ENCODE measurements at regions of chr2 and their contacts with region 1.

Region 1: DNA sequence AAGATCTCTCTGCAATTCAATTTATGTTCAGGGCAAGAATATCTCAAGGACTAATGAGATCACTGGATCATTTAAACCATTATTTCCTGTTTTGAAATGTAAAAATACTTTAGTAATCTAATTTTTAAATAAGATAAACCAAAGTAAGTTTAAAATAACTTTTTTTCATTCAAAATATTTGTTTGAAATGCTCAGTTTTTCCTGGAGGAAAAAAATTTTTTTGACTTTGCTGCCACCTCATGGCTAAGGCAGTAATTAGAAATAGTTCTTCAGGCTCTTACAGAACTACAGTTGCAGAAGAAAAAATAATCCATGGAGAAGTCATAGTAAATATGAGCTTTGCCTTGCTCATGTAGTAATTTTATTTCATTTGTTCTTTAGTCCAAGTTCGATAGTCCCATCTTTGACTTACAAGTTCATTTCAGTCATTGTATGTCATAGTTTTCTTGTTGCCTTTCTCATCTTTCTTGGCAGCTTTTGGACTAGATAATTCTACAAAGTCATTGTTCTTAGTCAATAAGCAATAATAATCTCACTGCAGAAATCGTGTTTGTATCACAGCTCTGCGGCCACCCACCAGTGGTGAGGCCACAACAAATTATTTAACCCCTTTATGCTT is 127.4 kb downstream of the DPP4 start:
- DNase-seq: peak; percentile 28
- ATAC-seq: 0 out of 2 replicates have a peak, but pooled peaks have one; percentile 49
- H3K4me3 ChIP-seq: no peak overlapping the region
- H3K27ac ChIP-seq: no peak overlapping the region
- H3K4me1 ChIP-seq: no peaks in the 10 kb centered on the region
- H3K27me3 ChIP-seq: 0 out of 2 replicates have a peak, but pooled peaks cover 3% of the 10 kb centered on the region
- CTCF ChIP-seq: peak; percentile 54
- POLR2A ChIP-seq: no peak
- RAD21 ChIP-seq: peak; percentile 57

Region 2: DNA sequence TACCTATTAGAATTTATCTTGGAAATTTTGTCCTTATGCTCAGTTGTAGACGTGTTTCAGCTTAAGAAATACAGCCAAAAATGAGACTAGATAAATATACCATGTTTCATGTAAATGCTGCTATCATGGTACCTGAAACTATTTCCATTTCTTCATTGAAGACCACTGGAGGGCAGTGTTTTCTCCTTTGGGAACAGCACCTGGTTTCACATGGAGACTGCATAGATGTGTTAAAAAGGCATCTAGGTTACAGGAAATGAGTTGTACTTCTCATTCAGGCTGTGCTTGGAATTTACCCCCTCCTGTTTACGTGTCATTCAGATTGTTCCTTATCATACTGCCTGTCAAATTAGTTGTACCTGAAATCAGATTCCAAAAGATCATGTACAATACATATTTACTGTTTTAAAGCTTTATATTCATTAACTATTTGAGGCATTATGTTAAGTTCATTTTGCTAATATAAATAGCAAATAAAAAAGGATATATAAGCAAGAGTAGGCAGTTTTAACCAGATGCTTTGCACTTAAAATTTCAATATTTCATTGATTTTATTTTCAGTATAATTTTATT is 695.6 kb before region 1 on chr2:
- CTCF ChIA-PET with region 1: no interaction called
- POLR2A ChIA-PET with region 1: no interaction called
- dilution Hi-C with region 1: no loop called
- in situ Hi-C with region 1: loop called (anchors 25 kb)
- intact Hi-C with region 1: loop called (anchors 2 kb)
- DNase-seq: peak; percentile 37
- ATAC-seq: no peak
- H3K4me3 ChIP-seq: no peak overlapping the region
- H3K27ac ChIP-seq: no peak overlapping the region
- H3K4me1 ChIP-seq: no peaks in the 10 kb centered on the region
- H3K27me3 ChIP-seq: peaks cover 23% of the 10 kb centered on the region
- CTCF ChIP-seq: peak; percentile 53
- POLR2A ChIP-seq: no peak
- RAD21 ChIP-seq: peak; percentile 45

Region 3: GRCh38 chr2:161273038-161273760 is 673.4 kb before region 1 on chr2:
- CTCF ChIA-PET with region 1: no interaction called
- POLR2A ChIA-PET with region 1: no interaction called
- dilution Hi-C with region 1: no loop called
- in situ Hi-C with region 1: loop called (anchors 25 kb)
- intact Hi-C with region 1: no loop called
- DNase-seq: peak; percentile 72
- ATAC-seq: peak; percentile 61
- H3K4me3 ChIP-seq: no peak overlapping the region
- H3K27ac ChIP-seq: no peak overlapping the region
- H3K4me1 ChIP-seq: no peaks in the 10 kb centered on the region
- H3K27me3 ChIP-seq: no peaks in the 10 kb centered on the region; the same call in 1 of the 2 replicates
- CTCF ChIP-seq: peak; percentile 71
- POLR2A ChIP-seq: no peak
- RAD21 ChIP-seq: peak; percentile 66

Region 4: DNA sequence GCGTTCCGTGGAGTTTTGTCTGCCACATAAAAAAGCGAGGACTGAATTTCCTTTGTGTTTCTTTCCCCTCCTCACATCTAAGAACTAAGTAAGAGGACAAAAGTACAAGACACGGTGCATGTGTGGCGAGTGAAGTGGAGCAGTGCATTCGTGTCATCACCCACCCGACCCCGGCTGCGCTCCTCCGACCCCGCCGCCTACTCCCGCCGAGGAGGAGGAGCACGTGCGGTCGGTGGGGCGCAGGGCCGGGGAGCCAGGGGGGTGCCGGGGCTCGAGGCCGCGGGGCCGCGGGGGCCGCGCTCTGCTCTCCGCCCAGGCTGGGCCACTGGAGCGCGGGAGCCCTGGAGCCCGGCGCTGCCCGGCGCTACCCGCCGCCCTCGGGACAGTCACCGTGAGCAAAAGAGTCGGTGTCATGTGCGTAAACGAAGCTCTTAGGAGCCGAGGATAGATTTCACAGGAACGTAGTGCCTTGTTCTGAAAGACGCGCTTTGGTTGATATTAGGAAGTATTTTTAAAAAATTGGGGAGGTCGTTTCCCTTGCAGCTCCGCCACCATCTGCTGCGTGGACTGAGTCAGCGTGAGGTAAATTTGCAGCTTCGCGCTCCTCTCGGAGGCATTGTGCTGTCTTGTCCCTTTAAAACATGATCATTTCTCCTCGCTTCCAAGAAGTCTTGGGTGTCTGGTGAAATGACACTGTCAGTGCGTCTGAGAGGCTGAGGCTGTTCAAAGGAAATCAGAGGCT is 519.5 kb before region 1 on chr2:
- CTCF ChIA-PET with region 1: no interaction called
- POLR2A ChIA-PET with region 1: no interaction called
- dilution Hi-C with region 1: no loop called
- in situ Hi-C with region 1: no loop called
- intact Hi-C with region 1: loop called (anchors 5 kb)
- DNase-seq: peak; percentile 43
- ATAC-seq: peak; percentile 57
- H3K4me3 ChIP-seq: peak overlapping the region; percentile 4; the same call in 1 of the 2 replicates
- H3K27ac ChIP-seq: no peak overlapping the region
- H3K4me1 ChIP-seq: no peaks in the 10 kb centered on the region; the same call in 1 of the 2 replicates
- H3K27me3 ChIP-seq: peaks cover 74% of the 10 kb centered on the region
- CTCF ChIP-seq: no peak; the same call in 1 of the 2 replicates
- POLR2A ChIP-seq: no peak
- RAD21 ChIP-seq: 0 out of 2 replicates have a peak, but pooled peaks have one; percentile 10

Region 5: GRCh38 chr2:161586517-161587167 is 360.0 kb before region 1 on chr2:
- CTCF ChIA-PET with region 1: interaction called, 16 read pairs
- POLR2A ChIA-PET with region 1: no interaction called
- dilution Hi-C with region 1: no loop called
- in situ Hi-C with region 1: loop called (anchors 10 kb)
- intact Hi-C with region 1: loop called (anchors 1 kb)
- DNase-seq: peak; percentile 25
- ATAC-seq: peak; percentile 72
- H3K4me3 ChIP-seq: no peak overlapping the region
- H3K27ac ChIP-seq: no peak overlapping the region
- H3K4me1 ChIP-seq: no peaks in the 10 kb centered on the region
- H3K27me3 ChIP-seq: no peaks in the 10 kb centered on the region
- CTCF ChIP-seq: peak; percentile 69
- POLR2A ChIP-seq: no peak
- RAD21 ChIP-seq: peak; percentile 76

Region 6: GRCh38 chr2:162123806-162124758 is 177.5 kb after region 1 on chr2:
- CTCF ChIA-PET with region 1: interaction called, 4 read pairs
- POLR2A ChIA-PET with region 1: no interaction called
- dilution Hi-C with region 1: no loop called
- in situ Hi-C with region 1: no loop called
- intact Hi-C with region 1: loop called (anchors 1 kb)
- DNase-seq: peak; percentile 63
- ATAC-seq: peak; percentile 63; the same call in 1 of the 2 replicates
- H3K4me3 ChIP-seq: no peak overlapping the region
- H3K27ac ChIP-seq: no peak overlapping the region
- H3K4me1 ChIP-seq: peaks cover 5% of the 10 kb centered on the region; the same call in 1 of the 2 replicates
- H3K27me3 ChIP-seq: peaks cover 2% of the 10 kb centered on the region; the same call in 1 of the 2 replicates
- CTCF ChIP-seq: peak; percentile 77
- POLR2A ChIP-seq: no peak
- RAD21 ChIP-seq: peak; percentile 77

Region 7: DNA sequence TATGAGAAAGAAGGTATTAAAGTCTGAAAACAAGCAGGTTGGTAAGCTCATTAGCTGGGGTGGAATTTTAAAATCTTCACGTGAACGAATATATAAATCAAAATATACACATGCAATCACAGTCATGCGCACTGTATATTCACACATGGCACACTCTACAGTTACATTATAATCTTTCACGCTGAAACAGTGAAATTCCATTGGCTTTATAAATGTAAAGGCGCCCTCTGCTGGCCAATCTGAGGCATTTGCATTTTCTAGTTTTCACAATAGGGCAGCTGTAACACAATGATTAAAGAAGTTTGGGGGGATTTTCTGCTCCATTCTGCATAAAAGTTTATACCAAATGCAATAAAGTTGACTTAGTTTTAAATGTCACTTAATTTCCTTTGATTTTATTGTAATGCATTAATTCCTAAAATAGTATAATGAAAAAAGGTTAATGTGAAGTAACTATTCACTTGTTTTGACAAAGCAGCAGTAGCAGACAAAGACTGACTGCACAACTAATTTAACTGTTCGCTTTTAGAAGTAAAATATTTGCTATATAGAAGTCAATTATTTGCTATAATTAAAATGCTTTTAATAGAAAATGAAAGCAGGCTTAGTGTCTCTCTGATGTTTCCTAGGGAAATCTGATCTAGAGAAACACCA is 354.7 kb after region 1 on chr2:
- CTCF ChIA-PET with region 1: no interaction called
- POLR2A ChIA-PET with region 1: no interaction called
- dilution Hi-C with region 1: no loop called
- in situ Hi-C with region 1: no loop called
- intact Hi-C with region 1: loop called (anchors 5 kb)
- DNase-seq: peak; percentile 75
- ATAC-seq: peak; percentile 82
- H3K4me3 ChIP-seq: no peak overlapping the region
- H3K27ac ChIP-seq: no peak overlapping the region
- H3K4me1 ChIP-seq: no peaks in the 10 kb centered on the region
- H3K27me3 ChIP-seq: no peaks in the 10 kb centered on the region
- CTCF ChIP-seq: peak; percentile 86
- POLR2A ChIP-seq: no peak
- RAD21 ChIP-seq: peak; percentile 73

Measured in IMR-90 (cell line).